ENCODE measurements at regions of chr6 and their contacts with region 1.

Region 1: GRCh38 chr6:123802697-123803496 is 768 bp upstream of the NKAIN2 start:
- DNase-seq: peak; percentile 9
- H3K4me3 ChIP-seq: peak overlapping the region; percentile 42
- CTCF ChIP-seq: peak; percentile 94

Region 2: GRCh38 chr6:123788319-123788718 is 14.6 kb before region 1 on chr6:
- CTCF ChIA-PET with region 1: interaction called, 26 read pairs
- POLR2A ChIA-PET with region 1: no interaction called
- DNase-seq: no peak
- H3K4me3 ChIP-seq: no peak overlapping the region
- CTCF ChIP-seq: no peak

Region 3: GRCh38 chr6:124854338-124854922 is 1051.5 kb after region 1 on chr6:
- CTCF ChIA-PET with region 1: interaction called, 52 read pairs
- POLR2A ChIA-PET with region 1: no interaction called
- DNase-seq: no peak
- H3K4me3 ChIP-seq: no peak overlapping the region
- CTCF ChIP-seq: no peak

Measured in AG04449 (cell line).